Right cardiac atrium (tissue), 5 donors: ENCODE measurements at regions of chr1 and their contacts with region 1.

Region 1: GRCh38 chr1:20151906-20152598 is 12.9 kb downstream of the PLA2G2F start:
- DNase-seq: peak; percentile 93 to 96 (median 96)
- ATAC-seq: peak; percentile 88 to 92
- H3K4me3 ChIP-seq: no peak overlapping the region
- H3K27ac ChIP-seq: no peak overlapping the region
- H3K4me1 ChIP-seq: peaks cover 2% of the 10 kb centered on the region
- H3K27me3 ChIP-seq: no peaks in the 10 kb centered on the region

Region 2: GRCh38 chr1:19974822-19975416 is 177.1 kb before region 1 on chr1:
- intact Hi-C with region 1: loop called (anchors 5 to 10 kb)
- DNase-seq: peak; percentile 62 to 80 (median 65)
- ATAC-seq: peak; percentile 84 to 86
- H3K4me3 ChIP-seq: no peak overlapping the region
- H3K27ac ChIP-seq: peak overlapping the region; percentile 73
- H3K4me1 ChIP-seq: peaks cover 6% of the 10 kb centered on the region
- H3K27me3 ChIP-seq: no peaks in the 10 kb centered on the region

Region 3: DNA sequence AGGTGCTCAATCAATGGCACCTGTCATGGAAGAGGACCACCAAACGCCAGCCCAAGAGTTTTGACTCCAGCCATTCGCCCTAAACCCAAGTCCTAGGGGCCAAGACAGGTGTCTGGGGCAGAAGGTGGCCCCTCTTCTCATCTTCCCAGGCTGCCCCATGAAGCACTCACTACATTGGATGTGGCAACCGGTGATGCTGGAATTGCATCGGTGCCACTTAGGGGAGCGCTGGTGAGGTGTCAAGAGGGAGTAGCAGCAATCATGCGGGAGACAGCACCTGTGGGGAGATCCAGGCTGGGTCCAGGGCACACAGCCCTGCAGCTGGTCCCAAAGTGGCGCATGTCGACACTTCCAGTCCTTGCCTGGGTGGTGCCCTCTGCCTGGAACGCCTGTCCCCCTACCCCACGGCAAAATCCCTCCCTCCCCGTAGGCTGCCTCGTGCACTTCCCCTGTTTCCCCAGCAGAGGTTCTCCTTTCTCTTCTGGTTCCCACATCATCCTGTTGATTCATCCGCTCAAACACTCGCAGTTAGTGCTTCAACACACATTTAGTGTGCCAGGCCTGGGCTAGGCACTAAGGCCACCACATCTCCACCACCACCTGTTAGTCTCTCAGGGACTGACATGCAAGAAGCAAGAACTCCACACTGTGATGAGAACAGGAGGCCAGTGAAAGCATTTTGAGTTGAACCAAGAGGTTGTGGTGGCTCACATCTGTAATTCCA is 51.3 kb before region 1 on chr1:
- intact Hi-C with region 1: loop called (anchors 5 to 10 kb)
- DNase-seq: peak in 2 of 3 donors; percentile 71 to 78
- ATAC-seq: peak; percentile 77 to 82
- H3K4me3 ChIP-seq: no peak overlapping the region
- H3K27ac ChIP-seq: no peak overlapping the region
- H3K4me1 ChIP-seq: no peaks in the 10 kb centered on the region
- H3K27me3 ChIP-seq: no peaks in the 10 kb centered on the region